ENCODE measurements at regions of chr1 and their contacts with region 1.

Region 1: GRCh38 chr1:212070720-212071302 is 35.3 kb downstream of the DTL start:
- H3K4me3 ChIP-seq: no peak overlapping the region
- H3K27ac ChIP-seq: no peak overlapping the region
- H3K4me1 ChIP-seq: no peaks in the 10 kb centered on the region
- CTCF ChIP-seq: peak; percentile 29; the same call in 1 of the 2 replicates

Region 2: DNA sequence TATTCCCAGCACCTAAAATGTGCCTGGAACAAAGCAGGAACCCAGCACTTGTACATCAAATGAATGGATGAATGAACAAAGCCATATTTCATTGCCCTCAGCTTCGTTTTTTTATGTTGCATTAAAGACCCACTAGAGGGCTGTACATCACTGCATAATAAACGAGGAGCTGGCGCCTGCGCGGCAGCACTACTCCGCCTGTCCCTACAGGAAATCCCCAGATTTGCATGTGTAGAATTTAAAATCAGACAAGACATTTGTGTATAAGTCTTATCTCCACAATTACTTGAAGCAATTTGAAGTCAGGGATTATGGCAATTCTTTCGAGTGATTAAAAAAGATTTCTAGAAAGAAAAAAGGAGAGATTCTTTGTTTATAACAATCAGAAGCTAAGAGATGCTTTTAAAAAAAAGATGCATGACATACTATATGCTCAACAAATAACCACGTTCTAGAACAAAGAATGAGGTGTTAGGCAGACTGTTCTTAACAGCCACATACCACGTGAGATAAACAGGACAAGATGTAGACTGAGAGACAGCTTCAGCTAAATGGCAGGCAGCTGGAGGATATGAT is 390.0 kb before region 1 on chr1:
- CTCF ChIA-PET with region 1: interaction called, 22 read pairs
- POLR2A ChIA-PET with region 1: no interaction called
- H3K4me3 ChIP-seq: no peak overlapping the region
- H3K27ac ChIP-seq: no peak overlapping the region
- H3K4me1 ChIP-seq: no peaks in the 10 kb centered on the region
- CTCF ChIP-seq: peak; percentile 78

Region 3: GRCh38 chr1:212284744-212285684 is 214.2 kb after region 1 on chr1 and contains the start of gene PPP2R5A:
- CTCF ChIA-PET with region 1: interaction called, 12 read pairs
- POLR2A ChIA-PET with region 1: no interaction called
- H3K4me3 ChIP-seq: peak within 1 kb of the TSS; percentile 82
- H3K27ac ChIP-seq: peak within 1 kb of the TSS; percentile 82
- H3K4me1 ChIP-seq: 0 out of 2 replicates have a peak, but pooled peaks cover 3% of the 10 kb centered on the region
- CTCF ChIP-seq: peak; percentile 96

Region 4: GRCh38 chr1:212291505-212292134 is 220.8 kb after region 1 on chr1:
- CTCF ChIA-PET with region 1: interaction called, 52 read pairs
- POLR2A ChIA-PET with region 1: no interaction called
- H3K4me3 ChIP-seq: no peak overlapping the region
- H3K27ac ChIP-seq: no peak overlapping the region
- H3K4me1 ChIP-seq: peaks cover 15% of the 10 kb centered on the region; the same call in 1 of the 2 replicates
- CTCF ChIP-seq: peak; percentile 58

Region 5: DNA sequence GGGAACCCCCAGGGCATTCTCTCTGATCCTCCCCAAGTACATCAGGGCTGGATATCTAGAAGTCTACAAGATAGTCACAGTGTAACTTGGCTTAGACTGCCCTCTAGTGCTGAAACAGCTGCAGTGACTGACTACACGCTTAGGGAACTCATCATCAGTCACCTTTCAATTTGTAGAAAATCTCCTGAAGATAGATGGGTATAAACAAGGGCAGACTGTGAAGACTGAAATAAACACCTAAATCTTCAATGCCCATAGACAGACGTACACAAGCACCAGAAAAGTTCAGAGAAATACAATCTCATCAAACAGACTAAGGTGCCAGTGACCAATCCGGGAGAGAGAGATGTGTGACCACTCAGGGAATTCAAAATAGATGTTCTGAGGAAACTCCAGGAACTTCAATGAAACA is 297.3 kb after region 1 on chr1:
- CTCF ChIA-PET with region 1: interaction called, 64 read pairs
- POLR2A ChIA-PET with region 1: no interaction called
- H3K4me3 ChIP-seq: no peak overlapping the region
- H3K27ac ChIP-seq: no peak overlapping the region
- H3K4me1 ChIP-seq: no peaks in the 10 kb centered on the region
- CTCF ChIP-seq: no peak